Ascending aorta (tissue), 2 donors: ENCODE measurements at regions of chr11 and their contacts with region 1.

Region 1: GRCh38 chr11:47248664-47249377 is at the start of gene ACP2:
- DNase-seq: peak; percentile 62 to 94
- H3K4me3 ChIP-seq: peak within 1 kb of the TSS; percentile 81 to 96
- H3K27ac ChIP-seq: peak within 1 kb of the TSS; percentile 76 to 82
- H3K4me1 ChIP-seq: peaks cover 0 to 18% of the 10 kb centered on the region in 2 donors
- H3K27me3 ChIP-seq: no peaks in the 10 kb centered on the region
- CTCF ChIP-seq: peak in 2 of 3 experiments; percentile 15 to 26
- total RNA-seq, gene ACP2: 63.3 TPM

Region 2: DNA sequence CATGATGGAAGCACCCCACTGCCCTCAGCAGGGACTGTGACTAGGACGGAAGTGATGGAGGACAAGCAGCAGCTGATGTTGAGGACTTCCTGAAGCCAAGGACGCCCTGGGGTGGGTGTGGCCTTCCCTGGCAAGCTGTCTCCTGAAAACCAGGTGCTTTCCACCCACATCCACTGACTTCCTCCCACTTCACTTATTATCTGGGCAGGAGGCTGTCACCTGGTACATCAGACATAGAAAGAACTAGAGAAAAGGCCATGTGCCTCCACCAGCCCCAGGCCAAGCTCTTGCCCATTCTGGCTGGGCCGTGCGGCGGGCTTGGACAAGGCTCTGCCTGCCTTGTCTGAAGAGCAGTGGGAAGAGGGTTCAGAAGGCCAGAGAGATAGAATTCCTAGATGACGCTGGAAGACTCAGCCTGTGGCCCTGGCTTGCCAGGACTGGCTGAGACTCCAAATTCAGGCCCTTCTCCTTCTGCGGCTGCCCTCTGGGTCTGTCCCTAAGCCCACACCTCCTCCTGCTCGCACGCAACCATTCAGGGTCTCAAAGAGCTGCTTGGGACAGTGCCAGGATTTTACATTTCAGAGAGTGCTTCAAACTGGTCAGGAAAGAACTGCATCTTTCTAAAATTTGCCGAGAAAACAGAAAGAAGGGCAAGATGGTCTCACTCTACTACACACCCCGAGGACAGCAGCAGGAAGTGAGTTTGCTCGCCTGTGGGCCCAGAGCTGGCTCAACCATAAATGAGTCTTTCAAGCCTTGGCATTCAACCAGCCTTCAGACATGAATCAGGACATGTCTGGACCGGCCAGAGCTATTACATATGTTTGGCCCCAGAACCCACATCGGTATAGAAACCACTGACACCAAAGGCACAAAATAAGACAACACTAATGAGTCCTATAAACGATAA is 561.7 kb before region 1 on chr11:
- intact Hi-C with region 1: no loop called
- DNase-seq: no peak
- H3K4me3 ChIP-seq: no peak overlapping the region
- H3K27ac ChIP-seq: peak overlapping the region; percentile 67 to 80
- H3K4me1 ChIP-seq: peaks cover 0 to 15% of the 10 kb centered on the region in 2 donors
- H3K27me3 ChIP-seq: no peaks in the 10 kb centered on the region
- CTCF ChIP-seq: no peak

Region 3: GRCh38 chr11:47014097-47014496 is 234.7 kb before region 1 on chr11:
- intact Hi-C with region 1: no loop called
- DNase-seq: no peak
- H3K4me3 ChIP-seq: no peak overlapping the region
- H3K27ac ChIP-seq: no peak overlapping the region
- H3K4me1 ChIP-seq: no peaks in the 10 kb centered on the region
- H3K27me3 ChIP-seq: no peaks in the 10 kb centered on the region
- CTCF ChIP-seq: no peak

Region 4: DNA sequence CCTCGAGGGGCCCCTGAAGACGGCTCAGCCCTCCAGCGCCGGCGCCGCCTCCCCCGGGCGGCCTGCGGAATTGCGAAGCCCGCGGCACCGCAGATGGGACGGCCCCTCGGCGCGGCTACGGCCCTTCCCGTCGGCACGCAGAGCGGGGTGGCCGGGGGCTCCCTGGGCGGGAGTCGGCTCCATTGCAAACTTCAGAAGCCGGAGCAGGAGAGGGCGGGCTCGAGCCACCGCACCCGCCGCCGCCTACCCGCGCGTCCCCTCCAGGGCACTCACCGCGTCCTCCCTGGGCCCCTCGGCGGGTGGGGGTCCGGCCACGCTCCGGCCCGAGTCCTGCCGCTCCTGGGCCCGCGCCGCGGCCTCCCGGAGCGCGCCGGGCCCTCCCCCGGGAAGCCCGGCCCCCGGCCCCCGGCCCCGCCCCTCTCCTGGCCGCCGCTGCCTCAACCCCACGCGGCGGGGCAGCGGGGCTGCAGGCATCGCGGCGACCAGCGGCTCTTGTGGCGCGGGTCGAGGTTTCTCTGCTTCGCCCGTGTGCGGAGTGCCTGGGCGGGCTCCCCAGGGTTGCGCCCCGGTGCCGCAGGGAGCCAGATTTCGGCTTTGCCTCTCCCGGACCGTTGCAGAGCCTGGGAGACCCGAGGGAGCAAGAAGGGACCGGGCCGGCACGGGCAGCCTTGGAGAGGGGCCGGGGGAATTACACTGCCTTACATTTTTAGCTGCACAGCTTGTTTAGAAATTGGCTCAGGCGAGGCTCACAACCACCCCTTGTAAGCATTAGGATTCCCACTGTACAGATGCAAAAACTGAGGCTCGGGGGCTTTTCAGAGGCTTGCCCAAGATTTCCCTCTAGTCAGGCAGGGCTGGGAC is 62.5 kb before region 1 on chr11 and contains the start of gene PACSIN3:
- intact Hi-C with region 1: loop called (anchors 2 kb)
- DNase-seq: no peak
- H3K4me3 ChIP-seq: peak within 1 kb of the TSS; percentile 72 to 87
- H3K27ac ChIP-seq: peak within 1 kb of the TSS; percentile 93 to 95
- H3K4me1 ChIP-seq: peaks cover 4 to 31% of the 10 kb centered on the region in 2 donors
- H3K27me3 ChIP-seq: no peaks in the 10 kb centered on the region
- CTCF ChIP-seq: peak in 1 of 3 experiments; percentile 18
- total RNA-seq, gene PACSIN3: 32.7 TPM

Region 5: GRCh38 chr11:47269002-47269828 is 20.4 kb after region 1 on chr11:
- intact Hi-C with region 1: loop called (anchors 1 kb)
- DNase-seq: peak; percentile 67 to 94
- H3K4me3 ChIP-seq: peak overlapping the region; percentile 81 to 90
- H3K27ac ChIP-seq: peak overlapping the region; percentile 86 to 95
- H3K4me1 ChIP-seq: peaks cover 10 to 19% of the 10 kb centered on the region in 2 donors
- H3K27me3 ChIP-seq: no peaks in the 10 kb centered on the region
- CTCF ChIP-seq: peak in 2 of 3 experiments; percentile 12 to 15